MCF 10A (cell line): ENCODE measurements at regions of chr12 and their contacts with region 1.

Region 1: GRCh38 chr12:12704593-12705230 is 8.7 kb upstream of the GPR19 start:
- DNase-seq: peak; percentile 92
- H3K4me3 Mint-ChIP-seq: no peak overlapping the region
- H3K27ac Mint-ChIP-seq: no peak overlapping the region
- H3K4me1 Mint-ChIP-seq: peaks cover 11% of the 10 kb centered on the region
- H3K27me3 Mint-ChIP-seq: no peaks in the 10 kb centered on the region
- CTCF ChIP-seq: peak; percentile 98

Region 2: GRCh38 chr12:10771132-10771733 is 1933.5 kb before region 1 on chr12:
- CTCF ChIA-PET with region 1: no interaction called
- POLR2A ChIA-PET with region 1: no interaction called
- intact Hi-C with region 1: loop called (anchors 5 kb)
- DNase-seq: peak; percentile 56
- H3K4me3 Mint-ChIP-seq: no peak overlapping the region
- H3K27ac Mint-ChIP-seq: no peak overlapping the region
- H3K4me1 Mint-ChIP-seq: no peaks in the 10 kb centered on the region
- H3K27me3 Mint-ChIP-seq: peaks cover 94% of the 10 kb centered on the region
- CTCF ChIP-seq: peak; percentile 68

Region 3: DNA sequence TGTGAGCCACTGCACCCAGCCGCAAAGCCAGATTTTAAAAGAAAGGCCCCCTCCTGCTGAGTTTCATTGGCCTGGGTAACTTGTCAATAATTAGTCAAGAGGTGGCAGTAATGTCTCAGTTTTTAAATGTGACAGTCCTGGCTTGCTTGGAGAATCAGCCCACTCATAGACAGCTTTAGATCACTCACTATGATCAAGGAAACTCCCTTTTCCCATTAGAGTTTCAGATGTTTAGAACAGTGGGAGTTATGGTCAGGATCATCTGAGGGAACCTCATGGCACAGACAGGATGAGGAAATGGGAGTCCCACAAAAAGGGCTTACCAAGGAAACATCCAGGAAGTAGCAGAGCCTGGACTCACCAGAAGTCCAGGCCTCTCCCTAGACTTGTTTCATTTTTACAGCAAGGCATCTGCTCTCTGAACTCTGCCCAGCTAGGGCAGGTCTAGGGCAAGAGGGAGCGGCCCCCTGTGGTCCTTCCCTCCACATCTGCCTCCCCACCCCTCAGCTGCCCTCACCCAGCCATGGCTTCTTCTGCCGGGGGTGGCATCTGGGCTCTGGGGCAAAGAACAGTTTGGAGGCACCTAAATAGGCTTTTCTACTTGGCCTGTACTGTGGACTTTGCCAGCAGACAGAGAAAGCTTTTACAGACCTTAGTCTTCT is 622.7 kb before region 1 on chr12:
- CTCF ChIA-PET with region 1: interaction called, 8 read pairs
- POLR2A ChIA-PET with region 1: no interaction called
- intact Hi-C with region 1: loop called (anchors 1 kb)
- DNase-seq: peak; percentile 54
- H3K4me3 Mint-ChIP-seq: no peak overlapping the region
- H3K27ac Mint-ChIP-seq: no peak overlapping the region
- H3K4me1 Mint-ChIP-seq: no peaks in the 10 kb centered on the region
- H3K27me3 Mint-ChIP-seq: no peaks in the 10 kb centered on the region
- CTCF ChIP-seq: peak; percentile 29

Region 4: DNA sequence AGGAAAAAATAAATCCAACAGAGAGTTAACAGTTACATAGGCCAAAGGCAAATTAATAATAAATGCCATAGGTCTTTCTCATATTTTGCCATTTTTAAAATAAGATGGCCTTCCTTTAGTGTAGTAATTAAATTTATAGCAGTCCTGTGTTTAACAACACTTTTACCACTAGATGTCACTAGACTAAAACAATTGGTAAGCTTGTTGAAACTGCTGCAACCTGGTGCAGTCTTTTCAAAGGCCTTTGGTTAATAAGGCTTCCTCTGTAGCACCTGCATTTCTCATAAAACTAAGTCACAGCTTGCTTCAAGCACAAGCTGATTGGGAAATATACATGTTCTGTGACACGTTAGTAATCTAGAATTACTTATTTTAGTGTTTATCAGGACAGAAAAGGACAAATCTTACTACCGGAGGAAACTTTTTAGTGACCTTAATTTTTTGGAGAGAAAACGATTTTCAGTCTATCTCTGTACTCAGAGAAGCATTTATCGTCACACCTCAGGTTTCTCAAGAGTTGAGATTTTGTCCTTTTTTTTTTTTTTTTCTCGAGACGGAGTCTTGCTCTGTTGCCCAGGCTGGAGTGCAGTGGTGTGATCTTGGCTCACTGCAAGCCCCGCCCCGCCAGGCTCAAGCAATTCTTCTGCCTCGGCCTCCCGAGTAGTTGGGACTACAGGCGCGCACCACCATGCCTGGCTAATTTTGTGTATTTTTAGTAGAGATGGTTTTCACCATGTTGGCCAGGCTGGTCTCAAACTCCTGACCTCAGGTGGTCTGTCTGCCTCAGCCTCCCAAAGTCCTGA is 327.9 kb before region 1 on chr12:
- CTCF ChIA-PET with region 1: interaction called, 108 read pairs
- POLR2A ChIA-PET with region 1: interaction called, 4 read pairs
- intact Hi-C with region 1: loop called (anchors 1 kb)
- DNase-seq: peak; percentile 76
- H3K4me3 Mint-ChIP-seq: no peak overlapping the region
- H3K27ac Mint-ChIP-seq: no peak overlapping the region
- H3K4me1 Mint-ChIP-seq: no peaks in the 10 kb centered on the region
- H3K27me3 Mint-ChIP-seq: no peaks in the 10 kb centered on the region
- CTCF ChIP-seq: peak; percentile 57

Region 5: DNA sequence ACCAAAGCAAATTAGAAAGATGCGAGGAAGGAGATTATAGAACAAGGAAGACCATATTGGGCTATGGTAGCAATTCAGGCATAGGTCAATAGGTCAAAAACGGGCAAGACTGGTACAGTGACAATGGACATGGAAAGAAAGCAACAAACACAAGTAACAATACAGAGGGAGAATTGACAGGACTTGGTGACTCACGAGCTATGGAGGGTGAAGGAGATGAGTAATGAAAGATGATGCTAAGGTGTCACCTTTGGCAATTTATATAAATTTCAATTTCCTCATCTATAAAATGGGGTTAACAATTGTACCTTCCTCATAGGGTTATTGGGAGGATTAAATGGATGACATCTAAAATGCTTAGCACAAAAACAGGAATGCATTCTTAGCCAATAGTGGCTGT is 126.9 kb before region 1 on chr12:
- CTCF ChIA-PET with region 1: no interaction called
- POLR2A ChIA-PET with region 1: no interaction called
- intact Hi-C with region 1: no loop called
- DNase-seq: peak; percentile 25
- H3K4me3 Mint-ChIP-seq: no peak overlapping the region
- H3K27ac Mint-ChIP-seq: no peak overlapping the region
- H3K4me1 Mint-ChIP-seq: peaks cover 11% of the 10 kb centered on the region
- H3K27me3 Mint-ChIP-seq: no peaks in the 10 kb centered on the region
- CTCF ChIP-seq: no peak

Region 6: DNA sequence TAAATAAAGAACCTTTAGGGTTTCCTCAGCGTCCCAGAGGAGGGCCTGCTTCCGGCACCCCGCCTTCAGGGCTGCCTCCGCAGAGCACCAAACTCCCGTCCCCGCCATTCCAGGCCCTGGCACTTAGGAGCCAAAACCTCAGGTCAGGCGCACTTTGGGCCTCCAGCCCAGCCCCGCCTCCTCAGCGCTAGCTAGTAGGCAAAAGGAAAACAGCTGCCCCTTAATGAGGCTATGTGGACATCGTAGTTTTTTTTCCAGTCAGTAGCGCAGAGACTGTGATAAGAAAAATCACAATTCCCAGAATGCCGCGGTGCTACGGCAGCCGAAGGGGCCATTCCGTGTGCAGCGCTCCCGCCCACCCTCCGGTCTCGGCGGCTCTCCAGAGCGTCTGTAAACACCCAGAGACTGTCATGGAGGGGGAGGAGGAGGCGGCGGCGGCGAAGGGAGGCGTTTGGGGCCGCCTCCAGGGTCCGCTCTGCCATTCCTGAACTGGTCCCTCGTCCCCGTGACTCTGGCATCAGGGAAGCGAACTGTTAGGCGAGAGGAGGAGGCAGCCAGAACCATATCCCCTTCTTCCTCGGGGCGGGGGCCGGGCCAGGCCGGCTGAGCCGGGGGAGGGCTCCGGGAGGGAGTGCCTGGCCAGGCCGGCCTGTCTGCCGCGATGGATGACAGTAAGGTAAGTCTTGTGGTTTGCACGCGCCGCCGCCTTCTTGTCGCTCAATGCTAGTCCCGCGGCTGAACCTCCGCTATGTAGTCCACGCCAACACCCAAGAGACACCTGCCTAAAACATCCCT is 93.0 kb before region 1 on chr12 and contains the start of gene CREBL2:
- CTCF ChIA-PET with region 1: interaction called, 8 read pairs
- POLR2A ChIA-PET with region 1: interaction called, 8 read pairs
- intact Hi-C with region 1: loop called (anchors 1 kb)
- DNase-seq: peak; percentile 92
- H3K4me3 Mint-ChIP-seq: peak within 1 kb of the TSS; percentile 95
- H3K27ac Mint-ChIP-seq: peak within 1 kb of the TSS; percentile 98
- H3K4me1 Mint-ChIP-seq: peaks cover 26% of the 10 kb centered on the region
- H3K27me3 Mint-ChIP-seq: no peaks in the 10 kb centered on the region
- CTCF ChIP-seq: no peak
- total RNA-seq, gene CREBL2: 17.4 and 22.5 TPM in 2 replicates

Region 7: GRCh38 chr12:12736759-12737676 is 32.3 kb after region 1 on chr12:
- CTCF ChIA-PET with region 1: interaction called, 11 read pairs
- POLR2A ChIA-PET with region 1: no interaction called
- intact Hi-C with region 1: no loop called
- DNase-seq: peak; percentile 55
- H3K4me3 Mint-ChIP-seq: no peak overlapping the region
- H3K27ac Mint-ChIP-seq: peak overlapping the region; percentile 71
- H3K4me1 Mint-ChIP-seq: peaks cover 24% of the 10 kb centered on the region
- H3K27me3 Mint-ChIP-seq: no peaks in the 10 kb centered on the region
- CTCF ChIP-seq: peak; percentile 52

Region 8: GRCh38 chr12:12791756-12792369 is 87.2 kb after region 1 on chr12:
- CTCF ChIA-PET with region 1: no interaction called
- POLR2A ChIA-PET with region 1: no interaction called
- intact Hi-C with region 1: no loop called
- DNase-seq: no peak
- H3K4me3 Mint-ChIP-seq: no peak overlapping the region
- H3K27ac Mint-ChIP-seq: no peak overlapping the region
- H3K4me1 Mint-ChIP-seq: no peaks in the 10 kb centered on the region
- H3K27me3 Mint-ChIP-seq: no peaks in the 10 kb centered on the region
- CTCF ChIP-seq: no peak

Region 9: DNA sequence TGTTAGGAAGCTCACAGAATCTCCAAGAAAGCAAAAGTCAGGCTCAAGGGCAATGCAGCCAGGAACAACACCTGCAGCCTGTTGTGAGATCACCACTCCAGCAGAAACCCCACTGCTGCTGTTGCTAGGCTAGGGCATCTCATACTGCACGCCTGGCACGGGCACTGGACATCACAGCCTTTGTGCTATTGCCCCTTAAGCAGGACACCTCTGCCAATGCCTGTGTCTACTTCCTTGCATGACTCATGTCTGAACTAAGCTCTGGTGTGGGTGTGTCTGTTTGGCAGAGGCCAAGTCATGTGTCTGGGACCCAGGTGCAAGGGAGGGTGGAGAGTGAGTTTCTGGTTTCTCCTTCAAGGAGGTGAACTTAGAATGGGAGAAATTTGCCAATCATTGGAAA is 98.5 kb after region 1 on chr12:
- CTCF ChIA-PET with region 1: no interaction called
- POLR2A ChIA-PET with region 1: no interaction called
- intact Hi-C with region 1: no loop called
- DNase-seq: peak; percentile 99
- H3K4me3 Mint-ChIP-seq: peak overlapping the region; percentile 11
- H3K27ac Mint-ChIP-seq: peak overlapping the region; percentile 67
- H3K4me1 Mint-ChIP-seq: peaks cover 48% of the 10 kb centered on the region
- H3K27me3 Mint-ChIP-seq: no peaks in the 10 kb centered on the region
- CTCF ChIP-seq: no peak

Region 10: DNA sequence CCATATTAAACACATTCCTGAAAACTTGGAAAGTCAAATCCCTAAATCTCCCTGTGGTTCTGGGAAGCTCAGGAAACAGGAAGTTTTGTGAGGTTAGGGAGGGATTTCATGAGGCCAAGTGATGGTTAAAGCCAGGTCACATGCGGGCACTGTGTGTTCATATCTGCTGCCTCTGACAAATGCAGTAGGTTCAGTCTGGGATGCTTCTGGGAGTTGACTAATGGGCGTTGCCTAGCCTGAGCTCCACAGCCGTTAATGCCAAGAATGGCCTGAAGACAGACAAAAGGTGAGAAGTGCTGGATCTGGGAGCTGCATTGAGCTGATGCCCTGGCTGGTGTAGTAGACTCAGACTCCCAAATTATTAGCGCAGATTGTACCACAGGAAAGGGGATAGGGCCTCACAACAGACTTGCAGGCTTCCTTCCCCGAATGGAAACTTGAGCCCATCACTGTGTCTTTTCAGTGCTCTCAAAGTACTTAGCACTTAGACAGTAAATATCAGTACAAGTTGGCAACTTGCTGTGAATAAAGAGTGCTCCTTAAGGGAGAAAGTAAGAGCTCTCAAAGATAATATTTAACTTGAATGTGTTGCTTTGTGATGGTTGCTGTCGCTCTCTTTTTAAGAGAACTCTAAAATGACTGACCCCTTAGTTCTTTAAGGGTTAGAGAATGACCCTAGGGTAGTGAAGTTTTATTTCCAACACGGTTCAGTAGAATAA is 381.4 kb after region 1 on chr12:
- CTCF ChIA-PET with region 1: no interaction called
- POLR2A ChIA-PET with region 1: no interaction called
- intact Hi-C with region 1: no loop called
- DNase-seq: no peak
- H3K4me3 Mint-ChIP-seq: no peak overlapping the region
- H3K27ac Mint-ChIP-seq: no peak overlapping the region
- H3K4me1 Mint-ChIP-seq: peaks cover 7% of the 10 kb centered on the region
- H3K27me3 Mint-ChIP-seq: no peaks in the 10 kb centered on the region
- CTCF ChIP-seq: no peak